Activated T-helper 1 cell treated with anti-CD3 and anti-CD28 coated beads, Interleukin-12 subunit alpha, Interleukin-12 subunit beta, Interleukin-2, Interleukin-4 antibody, amounts not matched to agents 30 ng/mL and 10 ng/mL and 1 ng/mL, durations not matched to agents 14 hours and 24 hours and 36 hours (primary cell): ENCODE measurements at regions of chr5 and their contacts with region 1.

Region 1: DNA sequence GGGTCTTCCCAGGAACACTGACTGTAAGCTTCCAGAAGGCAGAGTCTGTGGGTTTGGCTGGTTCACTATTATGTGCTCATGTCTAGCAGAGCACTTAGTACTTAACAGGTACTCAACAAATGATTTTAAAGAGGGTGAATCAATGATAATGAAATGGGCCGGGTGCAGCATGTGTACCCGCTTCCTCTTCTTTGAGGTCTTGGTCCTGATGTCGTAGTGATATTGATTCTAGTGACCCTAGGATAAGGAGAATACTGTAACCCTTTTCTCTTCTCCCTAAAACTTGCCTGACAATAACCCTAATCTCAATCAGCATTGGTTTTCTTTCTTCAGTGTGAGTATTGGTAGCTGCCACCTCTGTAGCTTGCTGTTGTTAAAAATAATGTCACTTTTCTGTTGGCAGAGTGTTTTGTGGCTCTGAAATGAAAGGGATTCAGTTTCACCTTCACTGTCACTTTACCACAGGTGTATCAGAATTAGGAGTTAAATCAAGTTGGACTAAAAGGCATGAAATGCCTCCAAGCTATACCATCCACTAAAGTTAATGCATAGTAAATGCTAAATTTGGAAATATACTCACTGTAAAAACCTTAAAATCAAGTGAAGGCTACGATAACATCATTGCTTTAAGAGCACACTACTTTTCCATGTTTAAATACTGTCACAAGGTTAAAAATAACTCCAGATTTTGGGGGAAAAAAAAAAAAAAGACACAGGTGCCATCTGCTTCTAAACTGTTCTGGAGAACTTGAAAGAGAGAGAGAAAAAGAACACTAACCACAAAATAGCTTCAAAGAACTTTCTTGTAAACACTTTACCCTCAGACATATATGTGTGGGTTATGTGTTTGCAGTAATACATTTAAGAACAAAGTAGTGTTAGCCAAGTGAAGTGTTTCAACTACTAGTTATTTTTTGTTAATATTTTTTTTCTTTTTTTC is 6.0 kb downstream of the CAMK4 start:
- DNase-seq: no peak
- H3K4me3 Mint-ChIP-seq: peak overlapping the region; percentile 79
- H3K27ac Mint-ChIP-seq: peak overlapping the region; percentile 96
- H3K4me1 Mint-ChIP-seq: peaks cover 97% of the 10 kb centered on the region
- H3K27me3 Mint-ChIP-seq: no peaks in the 10 kb centered on the region

Region 2: DNA sequence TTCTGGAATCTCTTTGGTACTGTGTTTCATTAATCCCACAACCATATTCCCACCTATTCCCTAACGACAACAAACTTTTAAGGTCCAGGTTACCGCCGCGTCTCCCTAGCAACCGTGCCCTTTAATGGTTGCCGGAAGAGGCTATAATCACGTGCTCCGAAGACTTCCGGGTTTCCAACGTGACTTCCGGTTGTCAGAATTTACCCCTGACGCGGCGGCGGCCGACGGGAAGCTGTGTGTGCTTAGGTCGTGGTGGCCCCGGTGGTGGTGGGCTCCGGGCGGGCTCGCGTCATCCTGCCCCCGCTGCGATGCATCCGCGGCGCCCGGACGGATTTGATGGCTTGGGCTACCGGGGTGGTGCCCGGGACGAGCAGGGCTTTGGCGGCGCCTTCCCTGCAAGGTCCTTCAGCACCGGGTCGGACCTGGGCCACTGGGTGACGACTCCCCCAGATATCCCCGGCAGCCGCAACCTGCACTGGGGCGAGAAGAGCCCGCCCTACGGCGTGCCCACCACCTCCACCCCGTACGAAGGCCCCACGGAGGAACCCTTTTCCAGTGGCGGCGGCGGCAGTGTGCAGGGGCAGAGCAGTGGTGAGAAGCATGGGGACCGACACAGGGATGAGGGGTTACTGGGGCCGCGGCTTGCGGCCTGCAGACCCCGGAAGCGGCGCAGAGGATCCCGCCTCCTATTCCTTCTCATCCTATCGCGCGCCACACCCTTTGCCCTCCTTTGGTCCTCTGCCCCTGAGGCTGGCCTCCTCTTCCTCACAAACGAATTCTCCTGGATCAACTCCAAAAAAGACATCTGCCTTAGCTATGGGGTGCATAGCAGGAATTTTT is 491.1 kb before region 1 on chr5 and contains the start of gene SLC25A46:
- intact Hi-C with region 1: loop called (anchors 5 kb)
- DNase-seq: peak; percentile 85
- H3K4me3 Mint-ChIP-seq: peak within 1 kb of the TSS; percentile 97
- H3K27ac Mint-ChIP-seq: peak within 1 kb of the TSS; percentile 96
- H3K4me1 Mint-ChIP-seq: peaks cover 39% of the 10 kb centered on the region
- H3K27me3 Mint-ChIP-seq: peaks cover 11% of the 10 kb centered on the region
- total RNA-seq, gene SLC25A46: 54.6 and 55.4 TPM in 2 replicates

Region 3: DNA sequence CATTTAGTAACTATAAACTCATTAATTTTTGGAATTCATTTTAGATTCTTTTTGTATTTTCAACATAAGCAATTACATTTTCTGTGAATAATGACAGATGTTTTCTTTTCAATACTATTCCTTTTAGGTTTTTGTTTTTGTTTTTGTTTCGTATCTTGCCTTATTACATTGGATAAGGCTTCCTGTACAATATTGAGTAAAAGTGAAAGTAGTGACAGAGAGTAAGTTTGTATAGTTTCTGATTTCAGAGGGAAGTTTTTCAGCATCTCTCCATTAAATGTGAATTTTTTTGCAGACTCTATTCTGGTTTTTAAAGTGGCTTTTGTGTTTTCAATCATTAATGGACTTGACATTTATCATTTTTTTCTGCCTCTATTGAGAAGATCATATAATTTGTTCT is 18.8 kb before region 1 on chr5:
- intact Hi-C with region 1: loop called (anchors 1 kb)
- DNase-seq: no peak
- H3K4me3 Mint-ChIP-seq: no peak overlapping the region
- H3K27ac Mint-ChIP-seq: peak overlapping the region; percentile 27
- H3K4me1 Mint-ChIP-seq: peaks cover 36% of the 10 kb centered on the region
- H3K27me3 Mint-ChIP-seq: peaks cover 2% of the 10 kb centered on the region